ENCODE measurements at regions of chr22 and their contacts with region 1.

Region 1: DNA sequence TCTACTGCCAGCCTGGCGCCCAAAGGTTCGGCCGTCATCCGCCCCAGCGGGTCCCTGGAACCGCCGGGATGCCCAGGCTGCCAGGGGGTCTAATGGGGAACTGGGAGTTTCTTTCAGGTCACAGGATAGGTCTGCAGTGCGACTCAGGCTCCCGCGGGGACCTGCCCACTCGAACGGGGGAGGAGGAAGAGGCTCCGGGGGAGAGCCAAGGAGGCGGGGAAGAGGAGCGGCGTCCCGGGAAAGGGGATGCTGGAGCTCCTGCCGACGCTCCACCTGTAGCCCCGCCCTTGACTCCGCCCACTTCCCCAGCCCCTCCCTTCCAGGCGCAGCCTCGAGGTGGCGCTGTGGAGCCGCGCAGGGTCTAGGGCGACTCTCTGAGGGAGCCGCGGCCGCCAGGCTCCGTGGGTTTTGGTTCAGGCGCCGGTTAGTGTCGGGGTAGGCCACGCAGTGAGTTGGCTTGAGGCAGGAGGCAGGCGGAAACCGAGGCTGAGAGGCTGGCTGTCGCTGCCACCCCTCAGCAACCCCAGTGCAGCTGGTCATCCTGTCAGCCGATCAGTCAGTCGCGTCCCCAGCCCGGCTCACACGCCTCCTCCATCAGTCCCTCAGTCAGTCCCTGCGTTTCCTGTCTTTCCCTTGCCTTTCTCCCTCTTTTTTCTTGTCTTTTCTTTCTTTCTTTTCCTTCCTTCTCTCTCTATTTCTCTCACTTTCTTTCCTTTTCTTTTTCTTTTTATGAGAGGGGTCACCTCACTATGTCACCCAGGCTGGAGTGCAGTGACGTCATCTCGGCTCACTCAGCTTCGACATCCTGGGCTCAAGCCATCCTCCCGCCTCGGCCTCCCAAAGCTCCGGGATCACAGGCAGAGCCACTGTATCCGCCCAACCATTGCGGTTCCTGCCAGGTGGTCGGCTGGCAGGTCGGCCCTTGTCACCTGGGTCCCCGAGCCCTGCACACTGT is 26.4 kb downstream of the YWHAH start:
- DNase-seq: peak; percentile 90
- H3K4me3 ChIP-seq: peak overlapping the region; percentile 52
- H3K27ac ChIP-seq: no peak overlapping the region
- H3K4me1 ChIP-seq: no peaks in the 10 kb centered on the region
- H3K27me3 ChIP-seq: no peaks in the 10 kb centered on the region
- CTCF ChIP-seq: peak; percentile 90

Region 2: GRCh38 chr22:31952459-31952858 is 18.3 kb before region 1 on chr22:
- CTCF ChIA-PET with region 1: interaction called, 6 read pairs
- POLR2A ChIA-PET with region 1: interaction called, 12 read pairs
- intact Hi-C with region 1: no loop called
- DNase-seq: no peak
- H3K4me3 ChIP-seq: no peak overlapping the region
- H3K27ac ChIP-seq: no peak overlapping the region
- H3K4me1 ChIP-seq: peaks cover 19% of the 10 kb centered on the region
- H3K27me3 ChIP-seq: no peaks in the 10 kb centered on the region
- CTCF ChIP-seq: no peak; the same call in 1 of the 2 replicates

Measured in A673 (cell line).